ENCODE measurements at regions of chr2 and their contacts with region 1.

Region 1: GRCh38 chr2:72137498-72138010 is 10.1 kb downstream of the CYP26B1 start:
- DNase-seq: peak; percentile 64 to 88
- ATAC-seq: peak; percentile 70 to 91
- H3K4me3 ChIP-seq: no peak overlapping the region
- H3K27ac ChIP-seq: peak overlapping the region in 1 of 2 experiments; percentile 63; a peak in 3 of 6 replicates
- H3K4me1 ChIP-seq: peaks cover 27% of the 10 kb centered on the region
- CTCF ChIP-seq: peak; percentile 98
- EP300 ChIP-seq: no peak
- POLR2A ChIP-seq: no peak
- RAD21 ChIP-seq: peak; percentile 77 to 81

Region 2: DNA sequence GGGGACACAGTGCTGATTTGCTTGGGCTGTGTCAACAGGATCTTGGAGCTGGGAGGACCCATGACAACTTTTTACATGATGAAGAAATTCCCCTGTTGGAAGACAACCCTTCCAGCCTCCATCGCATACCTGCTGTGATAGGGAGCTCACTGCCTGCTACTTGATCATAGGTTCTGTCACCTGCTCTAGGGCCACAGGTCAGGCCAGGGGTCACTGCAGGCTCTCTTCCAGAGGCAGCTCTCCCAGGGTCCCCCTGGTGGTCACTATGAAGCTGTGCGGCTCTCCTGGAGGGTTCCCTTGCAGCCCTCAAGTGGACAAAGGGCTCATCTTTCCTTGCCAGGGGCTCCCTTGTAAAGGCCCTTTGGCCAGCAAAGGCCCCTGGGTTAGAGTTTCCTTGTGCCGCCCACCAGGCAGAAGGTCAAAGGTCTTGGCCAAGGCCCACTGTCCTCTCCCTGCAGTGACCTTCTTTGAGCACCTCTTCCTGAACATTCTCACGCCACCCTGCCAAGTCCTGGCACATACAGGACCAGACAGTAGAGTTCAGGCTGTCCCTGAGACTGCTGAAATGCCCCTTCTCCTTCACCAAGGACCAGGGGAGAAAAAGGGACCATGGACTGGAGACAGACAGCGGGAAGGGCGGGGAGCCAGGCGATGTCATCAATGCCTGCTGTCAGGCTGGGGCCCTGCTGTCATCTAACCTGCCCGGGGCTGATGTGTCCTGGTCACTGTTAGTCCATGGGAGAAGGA is 339.1 kb before region 1 on chr2:
- CTCF ChIA-PET with region 1: interaction called, 14 read pairs
- POLR2A ChIA-PET with region 1: no interaction called
- DNase-seq: peak; percentile 71 to 74
- ATAC-seq: peak; percentile 73 to 90
- H3K4me3 ChIP-seq: no peak overlapping the region
- H3K27ac ChIP-seq: no peak overlapping the region
- H3K4me1 ChIP-seq: peaks cover 9% of the 10 kb centered on the region
- CTCF ChIP-seq: peak; percentile 79
- EP300 ChIP-seq: no peak
- POLR2A ChIP-seq: no peak
- RAD21 ChIP-seq: peak; percentile 70 to 75

Region 3: GRCh38 chr2:71884303-71885042 is 253.1 kb before region 1 on chr2:
- CTCF ChIA-PET with region 1: no interaction called
- POLR2A ChIA-PET with region 1: no interaction called
- DNase-seq: peak in 1 of 2 experiments; percentile 45
- ATAC-seq: no peak
- H3K4me3 ChIP-seq: no peak overlapping the region
- H3K27ac ChIP-seq: peak overlapping the region; percentile 67 to 78; a peak in 5 of 6 replicates
- H3K4me1 ChIP-seq: peaks cover 43% of the 10 kb centered on the region
- CTCF ChIP-seq: no peak
- EP300 ChIP-seq: no peak
- POLR2A ChIP-seq: no peak
- RAD21 ChIP-seq: no peak

Region 4: GRCh38 chr2:72081451-72081850 is 56.1 kb before region 1 on chr2:
- CTCF ChIA-PET with region 1: no interaction called
- POLR2A ChIA-PET with region 1: no interaction called
- DNase-seq: no peak
- ATAC-seq: no peak
- H3K4me3 ChIP-seq: no peak overlapping the region
- H3K27ac ChIP-seq: no peak overlapping the region
- H3K4me1 ChIP-seq: peaks cover 17% of the 10 kb centered on the region
- CTCF ChIP-seq: no peak
- EP300 ChIP-seq: no peak
- POLR2A ChIP-seq: no peak
- RAD21 ChIP-seq: no peak

Region 5: DNA sequence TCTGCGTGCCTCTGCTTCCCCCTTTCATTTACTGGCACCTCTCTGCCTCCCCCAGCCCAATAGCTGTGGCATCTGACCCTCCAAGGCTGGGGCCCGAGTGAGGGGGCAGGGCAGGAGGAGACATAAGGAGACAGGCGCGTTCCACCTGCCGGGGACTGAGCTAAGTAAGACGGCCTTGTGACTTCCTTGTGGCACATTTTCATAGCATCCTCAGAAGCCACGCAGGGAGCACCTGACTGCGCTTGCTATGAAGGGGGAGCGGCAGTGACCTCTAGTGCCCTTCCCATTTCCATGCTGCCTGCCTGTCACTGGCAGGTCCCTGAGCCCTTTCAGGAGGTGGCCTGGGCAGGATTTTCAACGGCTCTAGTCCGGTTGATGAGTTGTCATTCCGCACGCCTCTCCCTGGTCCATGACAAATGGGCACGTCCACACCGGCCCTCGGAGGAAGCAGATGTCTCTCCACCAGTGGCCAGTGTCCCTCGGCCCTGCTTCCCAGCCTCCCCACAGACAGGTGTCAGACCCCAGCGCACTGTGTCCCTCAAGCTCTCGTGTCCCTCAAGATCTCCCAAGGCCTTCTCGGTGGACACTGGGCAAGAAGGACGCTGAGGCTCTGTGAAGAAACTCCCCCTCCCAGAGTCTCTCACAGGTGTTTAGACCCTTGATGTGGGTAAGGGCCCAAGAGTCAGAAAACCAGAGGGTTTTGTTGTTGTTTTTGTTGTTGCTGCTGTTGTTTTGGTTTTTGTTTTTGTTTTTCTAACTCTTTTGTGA is 32.5 kb before region 1 on chr2:
- CTCF ChIA-PET with region 1: interaction called, 16 read pairs
- POLR2A ChIA-PET with region 1: no interaction called
- DNase-seq: no peak
- ATAC-seq: peak; percentile 39 to 51; a peak in 3 of 6 replicates
- H3K4me3 ChIP-seq: no peak overlapping the region
- H3K27ac ChIP-seq: no peak overlapping the region
- H3K4me1 ChIP-seq: peaks cover 8% of the 10 kb centered on the region
- CTCF ChIP-seq: no peak
- EP300 ChIP-seq: no peak
- POLR2A ChIP-seq: no peak; the same call in 1 of the 2 replicates
- RAD21 ChIP-seq: peak in 1 of 2 experiments; percentile 13; a peak in 1 of 5 replicates

Region 6: DNA sequence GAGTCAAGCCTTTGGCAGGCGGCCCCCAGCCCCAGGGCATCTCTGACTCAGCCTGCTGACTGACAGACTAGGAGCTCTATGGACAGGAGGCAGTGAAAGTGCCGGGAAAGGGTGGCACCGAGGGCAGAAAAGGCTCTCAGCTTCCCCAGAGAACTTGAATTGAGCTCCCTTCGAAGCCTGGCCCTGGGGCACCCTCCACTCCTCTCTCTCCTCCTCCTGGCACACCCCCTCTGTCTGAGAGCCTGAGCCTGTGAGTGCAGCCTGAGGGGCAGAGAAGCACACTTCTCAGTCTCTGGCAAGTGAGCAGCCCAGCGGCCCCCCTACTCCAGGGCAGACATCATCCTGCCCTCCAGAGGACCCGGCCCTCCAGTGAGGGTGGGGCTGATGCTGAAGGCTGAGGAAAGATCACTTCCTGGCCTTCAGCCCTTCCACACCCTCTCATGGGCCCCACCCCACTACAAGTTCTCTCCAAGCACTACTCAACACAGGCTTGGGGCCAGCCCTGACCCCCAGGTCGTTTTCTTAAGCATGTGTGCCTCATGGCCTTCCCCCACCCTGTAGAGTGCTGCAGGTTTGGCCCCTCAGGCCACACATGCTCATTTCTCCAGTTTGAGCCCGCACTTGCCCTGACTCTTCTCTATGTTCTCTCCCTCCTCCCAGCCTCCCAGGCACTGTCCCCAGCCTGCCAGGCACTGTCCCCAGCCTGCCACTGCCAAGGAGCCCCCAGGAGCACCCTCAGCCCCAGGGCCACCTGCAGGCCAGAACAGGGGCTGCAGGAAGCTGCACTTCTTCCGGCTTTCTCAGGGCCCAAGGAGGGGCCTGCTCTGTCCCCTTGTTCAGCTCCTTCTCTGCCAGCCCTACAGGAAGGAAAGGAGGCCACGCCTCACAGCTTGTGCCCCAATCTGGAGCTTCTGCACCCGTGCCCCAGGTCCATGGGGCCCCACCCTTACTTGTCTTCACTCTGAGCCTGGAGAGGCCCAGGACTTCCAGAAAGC is 21.7 kb before region 1 on chr2:
- CTCF ChIA-PET with region 1: interaction called, 16 read pairs
- POLR2A ChIA-PET with region 1: no interaction called
- DNase-seq: peak; percentile 87 to 97
- ATAC-seq: peak; percentile 91 to 92
- H3K4me3 ChIP-seq: 0 out of 3 replicates have a peak overlapping the region, but pooled peaks have one; percentile 6
- H3K27ac ChIP-seq: peak overlapping the region; percentile 66 to 88
- H3K4me1 ChIP-seq: peaks cover 33% of the 10 kb centered on the region
- CTCF ChIP-seq: peak; percentile 31; the same call in 2 of the 3 replicates
- EP300 ChIP-seq: no peak
- POLR2A ChIP-seq: no peak
- RAD21 ChIP-seq: 0 out of 5 replicates have a peak, but pooled peaks of 1 of the 2 experiments have one; percentile 20

Region 7: GRCh38 chr2:72121153-72121552 is 16.4 kb before region 1 on chr2:
- CTCF ChIA-PET with region 1: interaction called, 14 read pairs
- POLR2A ChIA-PET with region 1: no interaction called
- DNase-seq: no peak
- ATAC-seq: no peak
- H3K4me3 ChIP-seq: no peak overlapping the region
- H3K27ac ChIP-seq: no peak overlapping the region
- H3K4me1 ChIP-seq: peaks cover 9% of the 10 kb centered on the region
- CTCF ChIP-seq: no peak
- EP300 ChIP-seq: no peak
- POLR2A ChIP-seq: no peak
- RAD21 ChIP-seq: no peak

Region 8: GRCh38 chr2:72157871-72158771 is 20.6 kb after region 1 on chr2:
- CTCF ChIA-PET with region 1: interaction called, 11 read pairs
- POLR2A ChIA-PET with region 1: no interaction called
- DNase-seq: no peak
- ATAC-seq: no peak
- H3K4me3 ChIP-seq: no peak overlapping the region
- H3K27ac ChIP-seq: no peak overlapping the region
- H3K4me1 ChIP-seq: no peaks in the 10 kb centered on the region
- CTCF ChIP-seq: no peak
- EP300 ChIP-seq: no peak
- POLR2A ChIP-seq: no peak
- RAD21 ChIP-seq: no peak

Measured in A549 (cell line).